Activated CD4-positive, alpha-beta T cell treated with anti-CD3 and anti-CD28 coated beads for 36 hours (primary cell): ENCODE measurements at regions of chr18 and their contacts with region 1.

Region 1: GRCh38 chr18:76982841-76983587 is 149.6 kb downstream of the MBP start:
- DNase-seq: peak; percentile 92
- ATAC-seq: peak; percentile 99
- H3K4me3 Mint-ChIP-seq: no peak overlapping the region
- H3K27ac Mint-ChIP-seq: no peak overlapping the region
- H3K4me1 Mint-ChIP-seq: no peaks in the 10 kb centered on the region
- H3K27me3 Mint-ChIP-seq: no peaks in the 10 kb centered on the region

Region 2: DNA sequence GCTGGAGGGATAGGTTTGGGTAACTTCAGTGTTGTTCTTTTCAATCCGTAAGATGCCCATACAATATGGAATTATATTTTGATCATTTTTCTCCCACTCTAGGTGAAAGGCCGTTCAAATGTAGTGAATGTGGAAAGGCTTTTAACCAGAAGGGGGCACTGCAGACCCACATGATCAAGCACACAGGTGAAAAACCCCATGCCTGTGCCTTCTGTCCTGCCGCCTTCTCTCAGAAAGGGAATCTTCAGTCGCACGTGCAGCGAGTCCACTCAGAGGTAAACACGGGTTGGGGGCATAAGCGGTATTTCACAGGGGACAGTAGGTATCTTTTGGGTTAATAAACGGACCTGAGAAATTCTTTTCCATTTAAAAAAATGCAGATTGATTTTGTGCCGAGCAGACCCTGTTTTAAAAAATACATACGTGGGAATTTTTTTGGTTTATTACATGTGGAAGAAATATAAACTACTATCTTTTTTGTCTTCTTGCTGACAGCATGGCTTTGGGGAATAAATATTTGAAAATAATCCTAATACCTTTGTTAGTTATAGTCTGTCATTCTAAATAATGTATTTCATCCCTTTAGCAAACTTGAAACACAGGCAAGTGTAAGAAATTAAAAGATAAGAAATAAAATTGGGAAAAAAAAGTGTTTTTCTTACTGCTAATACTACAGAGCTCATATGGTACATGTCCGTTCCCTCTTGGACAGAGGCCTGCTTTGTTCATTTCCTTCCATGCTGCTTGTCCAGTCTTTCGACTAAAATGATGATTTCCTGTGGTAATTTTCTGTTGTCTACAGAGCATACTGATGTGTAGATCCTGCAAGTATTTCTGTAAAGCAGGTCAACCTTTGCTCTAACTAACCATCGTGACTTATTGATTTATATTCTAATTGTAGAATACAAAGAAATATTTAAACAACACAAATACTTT is 107.4 kb before region 1 on chr18:
- CTCF ChIA-PET with region 1: no interaction called
- POLR2A ChIA-PET with region 1: no interaction called
- intact Hi-C with region 1: loop called (anchors 1 kb)
- DNase-seq: peak; percentile 67
- ATAC-seq: peak; percentile 74
- H3K4me3 Mint-ChIP-seq: no peak overlapping the region
- H3K27ac Mint-ChIP-seq: peak overlapping the region; percentile 74
- H3K4me1 Mint-ChIP-seq: peaks cover 14% of the 10 kb centered on the region
- H3K27me3 Mint-ChIP-seq: no peaks in the 10 kb centered on the region

Region 3: DNA sequence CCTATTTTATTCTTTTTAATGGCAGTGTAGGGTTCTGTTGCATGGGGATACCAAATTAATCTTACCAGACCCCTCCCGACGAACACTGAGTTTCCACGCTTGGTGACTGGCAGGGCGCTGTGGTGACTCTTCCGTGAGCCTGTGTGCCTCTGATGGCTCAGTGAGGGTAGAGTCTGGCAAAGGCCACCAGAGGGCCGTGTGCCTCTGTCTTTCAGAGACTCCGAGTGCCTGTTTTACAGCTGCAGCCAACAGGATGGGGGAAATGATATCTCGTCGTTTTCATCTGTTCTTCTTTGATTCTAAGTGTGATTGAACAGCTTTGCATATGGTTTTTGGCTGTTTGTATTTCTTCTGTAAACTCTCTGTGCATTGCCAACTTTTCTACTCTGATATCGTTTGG is 60.9 kb before region 1 on chr18:
- CTCF ChIA-PET with region 1: interaction called, 6 read pairs
- POLR2A ChIA-PET with region 1: no interaction called
- intact Hi-C with region 1: loop called (anchors 1 kb)
- DNase-seq: peak; percentile 71
- ATAC-seq: peak; percentile 97
- H3K4me3 Mint-ChIP-seq: no peak overlapping the region
- H3K27ac Mint-ChIP-seq: no peak overlapping the region
- H3K4me1 Mint-ChIP-seq: peaks cover 15% of the 10 kb centered on the region
- H3K27me3 Mint-ChIP-seq: no peaks in the 10 kb centered on the region

Region 4: DNA sequence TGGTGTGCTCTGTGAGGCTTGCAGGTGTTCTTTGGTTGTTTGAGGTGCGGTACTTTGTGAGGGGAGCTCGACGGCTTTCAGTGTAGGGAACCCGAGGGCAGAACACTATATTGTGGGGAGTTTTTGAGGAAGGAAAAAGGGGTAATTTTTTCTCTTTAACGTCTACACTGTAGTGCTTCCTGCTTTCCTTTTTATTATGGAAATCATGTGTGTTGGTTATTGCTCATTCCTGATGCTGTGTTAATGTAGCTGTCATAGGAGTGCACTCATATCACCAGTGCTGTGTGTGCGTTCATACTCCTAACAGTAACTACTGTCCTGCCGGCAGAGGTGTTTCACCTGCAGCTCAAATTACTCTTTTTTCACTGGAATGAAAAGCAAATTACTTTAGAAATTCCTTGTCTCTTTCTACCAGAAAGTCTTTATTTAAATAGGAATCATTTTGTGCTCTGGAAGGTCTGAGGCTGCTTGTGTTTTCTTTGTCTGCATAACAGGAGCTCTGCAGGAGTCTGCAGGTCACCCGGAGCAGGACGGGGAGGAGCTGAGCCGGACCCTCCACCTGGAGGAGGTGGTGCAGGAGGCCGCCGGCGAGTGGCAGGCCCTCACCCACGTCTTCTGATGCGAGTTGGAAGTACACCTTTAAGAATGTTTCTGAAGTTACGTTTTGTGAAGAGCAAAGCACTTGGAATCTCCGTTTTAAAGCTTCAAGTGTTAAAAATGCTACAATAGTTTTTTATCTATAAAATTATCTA is 15.1 kb before region 1 on chr18:
- CTCF ChIA-PET with region 1: interaction called, 14 read pairs
- POLR2A ChIA-PET with region 1: no interaction called
- intact Hi-C with region 1: no loop called
- DNase-seq: no peak
- ATAC-seq: peak; percentile 49
- H3K4me3 Mint-ChIP-seq: no peak overlapping the region
- H3K27ac Mint-ChIP-seq: no peak overlapping the region
- H3K4me1 Mint-ChIP-seq: peaks cover 25% of the 10 kb centered on the region
- H3K27me3 Mint-ChIP-seq: no peaks in the 10 kb centered on the region

Region 5: DNA sequence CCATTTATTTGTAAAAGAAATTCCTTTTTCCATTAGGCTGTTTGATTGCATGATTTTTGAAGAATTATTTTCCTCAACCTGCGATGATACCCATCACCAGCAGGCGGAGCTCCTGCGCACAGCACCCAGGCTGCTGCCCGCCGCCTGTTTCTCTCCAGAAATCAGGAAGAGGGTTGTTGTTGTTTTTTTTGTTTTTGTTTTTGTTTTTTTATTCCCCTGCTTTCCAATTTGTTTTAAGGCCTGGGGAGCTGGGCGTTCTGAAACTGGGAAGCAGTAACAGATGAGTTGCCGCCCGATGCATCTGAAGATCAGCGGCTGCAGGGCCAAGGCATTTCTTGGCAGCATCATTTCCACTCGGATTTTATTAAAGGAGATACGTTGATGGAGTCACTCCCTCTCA is 17.5 kb after region 1 on chr18:
- CTCF ChIA-PET with region 1: interaction called, 22 read pairs
- POLR2A ChIA-PET with region 1: no interaction called
- intact Hi-C with region 1: no loop called
- DNase-seq: peak; percentile 70
- ATAC-seq: no peak
- H3K4me3 Mint-ChIP-seq: no peak overlapping the region
- H3K27ac Mint-ChIP-seq: peak overlapping the region; percentile 17
- H3K4me1 Mint-ChIP-seq: peaks cover 21% of the 10 kb centered on the region
- H3K27me3 Mint-ChIP-seq: no peaks in the 10 kb centered on the region

Region 6: DNA sequence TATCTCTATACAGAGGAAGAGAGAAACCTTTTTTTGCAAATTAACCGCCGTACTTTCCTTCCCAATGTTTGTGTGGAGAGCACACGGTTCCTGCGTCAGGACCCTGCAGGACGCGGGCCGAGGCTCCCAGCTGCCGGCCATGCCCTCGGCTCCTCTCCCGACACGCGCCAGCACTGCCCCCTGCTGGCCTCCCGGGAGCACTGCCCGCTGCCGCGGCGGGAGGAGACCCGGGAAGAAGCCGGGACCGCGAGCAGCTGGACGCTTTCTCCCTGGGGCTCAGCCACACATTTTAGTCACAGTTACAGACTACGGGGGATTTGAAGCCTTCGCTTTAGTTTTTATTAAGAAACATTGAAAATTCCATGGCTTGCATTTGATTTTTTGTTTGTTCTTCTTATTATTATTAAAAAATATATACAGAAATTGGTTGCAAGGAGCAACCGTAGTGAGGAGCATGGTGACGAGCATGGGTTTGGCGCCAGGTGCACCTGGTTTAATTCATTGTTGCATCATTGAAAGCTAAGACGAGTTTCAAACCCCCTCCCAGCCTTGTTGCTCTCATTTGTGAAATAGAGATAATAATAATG is 667.9 kb after region 1 on chr18:
- CTCF ChIA-PET with region 1: no interaction called
- POLR2A ChIA-PET with region 1: no interaction called
- intact Hi-C with region 1: loop called in 1 of 2 experiments (anchors 1 kb)
- DNase-seq: peak; percentile 82
- ATAC-seq: peak; percentile 83
- H3K4me3 Mint-ChIP-seq: no peak overlapping the region
- H3K27ac Mint-ChIP-seq: no peak overlapping the region
- H3K4me1 Mint-ChIP-seq: no peaks in the 10 kb centered on the region
- H3K27me3 Mint-ChIP-seq: peaks cover 14% of the 10 kb centered on the region